Dendritic cell treated with granulocyte-macrophage colony-stimulating factor and Interleukin-4, amounts not matched to agents 40 ng/mL and 50 ng/mL, for 4 days (primary cell): ENCODE measurements at regions of chr11 and their contacts with region 1.

Region 1: DNA sequence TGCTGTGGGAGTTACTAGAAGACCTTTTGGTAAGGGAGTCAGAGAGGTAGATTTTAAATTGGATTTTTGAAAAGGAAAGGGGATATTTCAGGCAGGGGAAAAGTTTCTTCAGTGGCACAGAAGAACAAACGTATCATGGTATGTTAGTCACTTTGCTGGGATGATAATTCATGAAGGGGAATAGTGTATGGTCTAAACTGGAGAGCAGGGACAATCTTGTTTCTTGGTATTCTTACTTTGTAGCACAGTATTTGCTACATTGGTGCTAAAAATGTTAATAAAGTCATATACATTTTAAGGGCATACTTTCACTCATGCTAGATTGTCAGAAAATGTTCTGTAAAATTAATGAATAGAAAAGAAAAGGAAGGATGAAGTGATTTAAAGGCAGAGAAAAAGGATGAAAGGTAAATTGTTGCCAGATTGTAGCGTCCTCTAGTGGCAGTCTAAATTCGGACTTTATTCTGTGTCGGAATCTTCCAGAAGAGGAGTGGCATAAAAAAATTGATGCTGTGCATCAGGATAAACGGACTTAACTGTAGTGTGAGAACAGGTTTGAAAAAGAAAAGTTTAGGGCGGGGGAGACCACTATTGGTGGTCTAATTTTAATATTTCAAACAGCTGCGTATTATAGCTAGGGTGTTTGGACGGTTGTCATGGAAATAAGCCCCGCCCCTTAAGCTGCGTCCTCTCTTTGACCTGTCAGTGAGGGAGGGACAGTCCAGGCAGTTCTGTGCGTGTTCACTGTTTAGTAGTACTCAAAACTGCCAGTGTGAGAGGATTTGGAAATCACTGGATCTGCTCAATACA is at the start of gene BCO2:
- H3K4me3 Mint-ChIP-seq: peak within 1 kb of the TSS; percentile 60
- H3K27ac Mint-ChIP-seq: peak within 1 kb of the TSS; percentile 73
- H3K4me1 Mint-ChIP-seq: peaks cover 26% of the 10 kb centered on the region
- H3K27me3 Mint-ChIP-seq: no peaks in the 10 kb centered on the region

Region 2: DNA sequence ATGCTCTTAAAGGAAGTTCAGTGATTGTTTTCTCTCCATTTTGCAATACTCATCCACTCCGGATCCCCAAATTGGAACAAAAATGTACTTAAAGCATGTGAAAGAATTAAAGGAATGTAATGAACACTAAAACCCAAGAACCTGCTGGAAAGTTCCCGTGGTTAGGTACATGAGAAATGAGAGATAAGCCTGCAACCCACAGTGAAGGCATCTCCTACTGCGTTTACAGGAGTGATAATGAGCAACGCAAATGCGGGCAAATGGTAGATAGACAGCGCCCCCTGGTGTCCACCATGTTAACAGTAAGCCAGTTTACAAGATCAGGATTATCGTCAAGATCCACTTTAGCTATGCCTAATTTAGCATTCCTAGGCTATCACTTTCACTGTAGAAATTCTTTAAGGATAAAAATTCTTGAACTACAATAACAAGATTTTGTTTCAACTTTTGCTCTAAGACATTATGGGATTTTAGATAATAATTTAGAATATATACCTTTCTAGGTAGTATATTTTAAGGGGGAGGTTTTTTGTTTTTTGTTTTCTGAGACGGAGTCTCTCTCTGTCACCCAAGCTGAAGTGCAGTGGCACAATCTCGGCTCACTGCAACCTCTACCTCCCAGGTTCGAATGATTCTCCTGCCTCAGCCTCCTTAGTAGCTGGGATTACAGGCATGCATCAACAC is 333.5 kb before region 1 on chr11:
- intact Hi-C with region 1: no loop called
- H3K4me3 Mint-ChIP-seq: no peak overlapping the region
- H3K27ac Mint-ChIP-seq: no peak overlapping the region
- H3K4me1 Mint-ChIP-seq: peaks cover 34% of the 10 kb centered on the region
- H3K27me3 Mint-ChIP-seq: no peaks in the 10 kb centered on the region

Region 3: DNA sequence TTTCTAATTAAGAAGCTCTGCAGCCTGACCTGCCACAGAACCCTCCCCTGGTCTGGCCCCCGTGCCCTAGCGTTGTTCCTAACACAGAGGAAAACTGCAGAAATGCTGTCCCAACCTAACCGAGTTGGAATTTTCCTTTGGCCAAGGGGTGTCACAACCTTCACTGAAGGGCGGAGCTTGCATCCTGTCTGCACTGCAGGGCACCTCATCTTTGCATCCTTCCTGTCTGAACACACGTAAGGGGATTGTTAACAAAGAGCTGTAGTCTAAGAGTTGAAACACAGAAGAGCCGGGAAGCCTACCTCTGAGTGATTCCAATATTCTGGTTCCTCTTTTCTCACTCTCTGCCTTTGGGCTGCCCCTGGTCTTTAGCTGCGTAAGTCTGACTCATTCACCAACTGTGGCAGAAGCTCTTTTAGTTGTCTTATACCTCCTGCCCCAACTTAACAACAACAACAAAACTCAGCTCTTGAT is 236.3 kb before region 1 on chr11:
- intact Hi-C with region 1: loop called (anchors 5 kb)
- H3K4me3 Mint-ChIP-seq: no peak overlapping the region
- H3K27ac Mint-ChIP-seq: peak overlapping the region; percentile 55
- H3K4me1 Mint-ChIP-seq: peaks cover 43% of the 10 kb centered on the region
- H3K27me3 Mint-ChIP-seq: peaks cover 9% of the 10 kb centered on the region

Region 4: DNA sequence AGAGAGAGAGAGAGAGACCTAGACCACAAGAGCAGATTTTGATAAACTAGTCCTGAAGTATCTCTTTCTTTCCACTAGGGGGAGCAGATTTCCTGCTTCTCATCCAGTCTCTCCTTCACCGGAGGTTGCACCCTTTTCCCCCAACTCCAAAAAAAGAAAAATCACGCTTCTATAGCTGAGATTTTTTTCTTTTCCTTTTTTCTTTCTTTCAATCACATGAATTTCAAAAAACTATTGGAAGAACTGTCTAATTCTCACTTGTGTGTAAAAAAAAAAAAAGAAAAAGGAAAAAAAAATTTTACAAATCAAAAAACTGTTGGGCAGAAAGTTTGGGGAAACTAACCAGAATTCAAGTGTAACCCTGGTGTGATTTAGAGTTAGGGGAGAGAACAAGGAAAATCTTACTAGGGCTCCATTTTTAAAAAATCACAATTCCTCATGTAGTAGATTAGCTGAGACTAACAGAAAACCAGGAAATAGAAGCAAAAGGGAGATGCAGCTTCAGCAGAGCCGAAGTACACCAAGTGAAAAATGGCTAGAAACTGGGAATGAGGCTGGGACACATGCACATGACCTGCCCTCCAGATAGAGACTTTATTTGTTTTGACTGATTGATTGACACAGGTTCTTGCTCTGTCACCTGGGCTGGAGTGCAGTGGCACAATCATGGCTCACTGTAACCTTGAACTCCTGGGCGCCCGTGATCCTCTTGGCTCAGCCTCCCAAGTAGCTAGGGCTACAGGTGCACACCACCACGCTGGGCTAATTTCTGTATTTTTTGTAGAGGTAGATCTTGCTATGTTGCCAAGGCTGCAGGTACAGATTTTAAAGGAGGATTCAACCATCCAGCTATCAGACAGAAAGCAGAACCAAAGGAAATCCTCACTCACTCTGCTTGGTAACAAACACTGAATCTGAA is 61.2 kb before region 1 on chr11:
- intact Hi-C with region 1: loop called (anchors 2 kb)
- H3K4me3 Mint-ChIP-seq: peak overlapping the region; percentile 23
- H3K27ac Mint-ChIP-seq: peak overlapping the region; percentile 74
- H3K4me1 Mint-ChIP-seq: no peaks in the 10 kb centered on the region
- H3K27me3 Mint-ChIP-seq: no peaks in the 10 kb centered on the region